Naive thymus-derived CD8-positive, alpha-beta T cell (primary cell): ENCODE measurements at regions of chr10 and their contacts with region 1.

Region 1: DNA sequence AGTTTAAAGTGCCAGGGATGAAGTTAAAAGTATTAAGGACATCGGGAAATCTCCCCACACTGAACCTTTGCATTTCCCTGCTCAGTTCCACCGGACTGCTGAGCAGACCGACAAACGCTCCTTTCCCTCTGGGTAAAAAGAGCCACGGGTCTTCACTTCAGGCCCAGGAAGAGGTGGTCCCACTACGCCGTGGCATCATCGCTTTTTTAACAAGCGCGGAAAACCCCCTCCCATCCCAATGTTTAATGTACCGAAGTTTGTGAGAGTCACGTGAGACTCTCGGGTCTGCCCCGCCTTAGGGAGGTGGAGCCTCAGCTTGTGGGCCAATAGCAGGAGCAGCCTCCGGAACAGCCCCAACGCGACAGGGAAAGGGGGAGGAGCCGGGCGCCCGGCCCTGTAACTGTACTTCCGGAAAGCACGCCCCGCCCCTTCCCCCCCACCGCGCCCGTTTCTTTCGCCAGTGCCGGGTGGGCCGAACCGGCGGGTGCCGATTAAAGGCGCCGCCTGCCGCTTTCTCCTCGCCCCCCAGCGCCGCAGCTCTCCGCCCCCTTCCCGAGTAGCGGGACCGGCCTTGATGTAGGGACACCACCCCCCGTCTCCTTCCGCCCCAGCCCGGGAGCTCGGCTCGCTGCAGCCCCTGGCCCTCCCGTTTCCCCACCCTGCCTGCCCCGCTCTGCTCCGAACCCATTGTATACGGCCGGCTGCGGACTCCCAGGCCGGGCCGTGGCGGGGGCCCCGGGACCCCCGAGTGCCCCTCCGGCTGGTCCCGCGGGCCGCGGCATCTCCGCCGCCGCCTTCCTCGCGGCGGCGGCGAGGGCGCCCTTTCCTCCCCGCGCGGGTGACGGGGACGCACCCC is 2.2 kb upstream of the TRIM8 start:
- DNase-seq: peak; percentile 89 to 99 (median 96)
- ATAC-seq: peak; percentile 57 to 75
- H3K4me3 Mint-ChIP-seq: peak overlapping the region; percentile 84 to 98 (median 92)
- H3K27ac Mint-ChIP-seq: peak overlapping the region; percentile 87 to 98 (median 96)
- H3K4me1 Mint-ChIP-seq: peaks cover 15 to 20% (median 17%) of the 10 kb centered on the region in 4 donors
- H3K27me3 Mint-ChIP-seq: no peaks in the 10 kb centered on the region

Region 2: DNA sequence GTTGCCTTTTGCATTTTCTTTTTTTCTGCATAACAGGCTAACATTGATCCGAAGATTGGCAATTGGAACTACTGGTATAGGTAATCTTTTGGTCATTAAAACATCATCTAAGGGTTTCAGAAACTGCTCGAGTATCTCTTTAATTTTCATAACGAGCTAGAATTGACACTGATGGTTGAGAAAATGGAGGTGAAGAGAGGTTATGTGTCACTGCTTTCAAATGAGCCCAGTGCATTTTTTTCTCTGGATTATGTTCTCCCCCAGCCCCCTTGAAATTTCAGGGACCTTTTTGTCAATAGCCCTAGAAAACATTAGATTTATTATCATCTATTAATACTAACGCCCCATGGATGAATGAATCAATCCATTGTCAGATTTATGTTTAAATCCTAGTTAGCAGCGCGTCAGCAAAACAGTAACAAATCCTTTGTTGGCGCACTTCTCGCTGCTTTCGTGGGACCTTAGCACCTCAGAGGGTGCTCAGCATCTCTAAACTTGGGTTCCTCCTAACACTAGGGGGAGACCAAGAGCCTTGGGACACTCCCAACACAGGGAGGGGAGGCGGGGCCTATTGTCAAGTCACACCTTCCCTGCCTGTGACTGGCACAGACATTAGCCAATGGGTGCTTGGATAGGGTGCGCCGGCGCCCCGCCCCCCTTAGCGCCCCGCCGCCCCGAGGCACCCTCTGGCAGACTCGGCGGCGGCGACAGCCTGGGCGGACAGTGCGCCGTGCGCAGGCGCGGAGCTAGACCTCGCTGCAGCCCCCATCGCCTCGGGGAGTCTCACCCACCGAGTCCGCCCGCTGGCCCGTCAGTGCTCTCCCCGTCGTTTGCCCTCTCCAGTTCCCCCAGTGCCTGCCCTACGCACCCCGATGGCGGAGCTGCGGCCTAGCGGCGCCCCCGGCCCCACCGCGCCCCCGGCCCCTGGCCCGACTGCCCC is 138.6 kb before region 1 on chr10 and contains the start of gene SUFU:
- POLR2A ChIA-PET with region 1: interaction called, 43 read pairs
- DNase-seq: peak; percentile 96 to 100 (median 98)
- ATAC-seq: peak; percentile 68 to 69
- H3K4me3 Mint-ChIP-seq: no peak within 1 kb of the TSS
- H3K27ac Mint-ChIP-seq: peak within 1 kb of the TSS in 8 of 10 donors; percentile 63 to 94 (median 88)
- H3K4me1 Mint-ChIP-seq: peaks cover 22 to 42% (median 35%) of the 10 kb centered on the region in 4 donors
- H3K27me3 Mint-ChIP-seq: no peaks in the 10 kb centered on the region
- polyA plus RNA-seq, gene SUFU: 2.3 to 7.4 (median 3.0) TPM

Region 3: DNA sequence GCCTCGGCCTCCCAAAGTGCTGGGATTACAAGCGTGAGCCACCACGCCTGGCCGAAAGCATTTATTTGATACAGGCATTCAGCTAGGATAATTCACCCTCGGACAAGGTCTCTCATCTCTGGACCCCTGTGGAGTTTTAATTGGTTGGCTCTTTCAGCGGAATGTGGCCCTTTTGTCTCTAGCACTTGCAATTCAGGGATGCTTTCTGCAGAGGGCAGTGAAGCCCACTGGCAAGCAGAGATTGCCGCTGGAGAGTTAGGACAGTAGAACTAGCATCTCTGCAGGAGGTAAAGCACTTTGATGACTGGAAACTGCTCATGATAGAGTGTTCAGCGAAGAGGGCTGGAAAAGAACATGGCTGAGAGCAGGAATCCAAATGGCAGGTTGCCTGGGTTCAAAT is 76.3 kb before region 1 on chr10:
- POLR2A ChIA-PET with region 1: no interaction called
- DNase-seq: no peak
- ATAC-seq: no peak
- H3K4me3 Mint-ChIP-seq: no peak overlapping the region
- H3K27ac Mint-ChIP-seq: peak overlapping the region in 1 of 10 donors; percentile 62
- H3K4me1 Mint-ChIP-seq: peaks cover 0 to 4% (median 0%) of the 10 kb centered on the region in 4 donors
- H3K27me3 Mint-ChIP-seq: no peaks in the 10 kb centered on the region

Region 4: DNA sequence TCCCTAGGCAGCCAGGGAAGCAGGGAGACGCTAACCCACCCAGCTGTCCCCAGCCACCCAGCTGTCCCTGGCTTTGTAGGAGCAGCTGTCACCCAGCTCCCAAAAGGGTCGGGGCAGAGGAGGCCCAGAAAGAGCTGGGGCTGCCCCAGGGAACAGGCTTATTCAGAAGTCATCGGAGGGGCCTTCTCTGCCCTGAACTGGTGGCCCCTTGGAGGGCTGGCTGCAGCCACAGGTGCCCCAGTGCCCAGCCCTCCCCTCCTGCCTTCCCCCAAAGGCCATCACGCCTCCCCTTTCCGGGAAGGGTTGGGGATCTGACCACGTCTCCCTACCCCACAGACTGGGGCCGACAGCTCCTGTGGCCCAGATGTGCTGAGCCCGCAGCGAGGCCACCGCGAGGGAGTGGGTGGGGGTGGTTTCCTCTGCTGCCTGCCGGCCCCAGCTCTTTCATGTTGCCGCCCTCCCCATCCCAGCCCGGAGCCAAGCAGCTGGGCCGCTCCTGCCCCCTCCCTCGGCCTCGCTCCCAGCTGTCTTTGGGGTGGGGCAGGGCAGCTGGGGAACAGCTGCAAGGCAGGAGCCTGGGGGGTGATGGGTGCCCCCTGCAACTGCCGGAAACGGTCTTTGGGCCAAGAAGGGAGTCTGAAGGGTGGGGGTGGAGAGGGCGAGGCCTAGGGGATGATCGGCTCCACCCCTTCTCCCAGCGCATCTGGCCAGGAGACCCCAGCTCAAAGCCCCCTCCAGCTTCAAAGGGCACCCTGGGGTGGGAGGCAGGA is 19.0 kb after region 1 on chr10:
- POLR2A ChIA-PET with region 1: interaction called, 624 read pairs
- DNase-seq: peak in 8 of 10 donors; percentile 37 to 55 (median 52)
- ATAC-seq: peak; percentile 79 to 84
- H3K4me3 Mint-ChIP-seq: peak overlapping the region; percentile 50 to 81 (median 64)
- H3K27ac Mint-ChIP-seq: peak overlapping the region; percentile 75 to 92 (median 86)
- H3K4me1 Mint-ChIP-seq: peaks cover 13 to 56% (median 45%) of the 10 kb centered on the region in 4 donors
- H3K27me3 Mint-ChIP-seq: no peaks in the 10 kb centered on the region

Region 5: GRCh38 chr10:102713814-102714620 is 71.9 kb after region 1 on chr10 and contains the start of gene ARL3:
- POLR2A ChIA-PET with region 1: interaction called, 89 read pairs
- DNase-seq: peak; percentile 83 to 97 (median 91)
- ATAC-seq: peak; percentile 88 to 90
- H3K4me3 Mint-ChIP-seq: peak within 1 kb of the TSS; percentile 88 to 97 (median 92)
- H3K27ac Mint-ChIP-seq: peak within 1 kb of the TSS; percentile 44 to 96 (median 91)
- H3K4me1 Mint-ChIP-seq: peaks cover 24 to 57% (median 47%) of the 10 kb centered on the region in 4 donors
- H3K27me3 Mint-ChIP-seq: no peaks in the 10 kb centered on the region
- polyA plus RNA-seq, gene ARL3: 3.7 to 4.4 (median 3.9) TPM

Region 6: DNA sequence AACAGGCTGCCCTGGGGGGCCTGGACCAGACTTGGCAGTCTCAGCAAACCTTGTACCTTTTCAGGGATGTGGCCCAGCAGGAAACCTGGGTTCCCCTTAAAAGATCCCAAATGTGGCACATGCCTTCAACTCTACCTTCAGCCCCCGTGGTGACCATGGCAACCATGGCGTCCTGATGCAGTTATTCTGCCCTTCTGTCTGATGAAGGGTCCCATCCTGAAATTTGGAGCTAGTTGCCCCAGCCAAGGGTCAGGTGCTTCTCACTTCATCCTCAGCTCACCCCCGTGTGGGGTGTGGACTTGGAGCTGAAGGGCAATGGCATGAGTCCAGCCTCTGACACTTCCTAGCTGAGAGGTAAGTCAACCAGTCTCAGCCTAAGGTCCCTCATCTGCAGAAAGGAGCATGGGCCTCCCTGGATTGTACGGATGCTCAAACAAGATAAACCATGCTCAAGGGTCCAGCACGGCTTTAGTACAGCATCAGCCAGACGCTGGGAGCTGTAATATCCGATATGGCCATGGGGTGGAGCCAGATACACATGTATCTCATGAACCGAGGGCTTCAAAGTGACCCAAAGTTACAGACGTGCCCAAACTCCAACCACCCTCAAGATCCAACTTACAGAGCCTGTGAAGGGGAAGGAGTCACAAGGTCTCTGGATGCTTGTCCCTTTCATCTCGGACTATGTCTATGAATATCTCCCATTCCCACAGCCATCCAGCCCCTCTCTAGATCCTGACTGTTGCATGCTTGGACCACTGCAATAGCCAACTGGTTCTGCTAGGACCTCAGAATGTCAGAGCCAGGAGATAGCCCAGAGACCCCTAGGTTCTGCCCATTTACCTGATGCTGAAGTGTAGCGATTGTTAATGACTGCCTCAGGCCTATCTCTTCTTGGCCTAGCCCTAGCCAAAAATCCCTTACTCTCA is 1070.7 kb after region 1 on chr10:
- POLR2A ChIA-PET with region 1: no interaction called
- DNase-seq: peak; percentile 54 to 88 (median 74)
- ATAC-seq: peak; percentile 87 to 90
- H3K4me3 Mint-ChIP-seq: no peak overlapping the region
- H3K27ac Mint-ChIP-seq: no peak overlapping the region
- H3K4me1 Mint-ChIP-seq: peaks cover 0 to 2% (median 0%) of the 10 kb centered on the region in 4 donors
- H3K27me3 Mint-ChIP-seq: peaks cover 0 to 7% (median 0%) of the 10 kb centered on the region in 5 donors